Naive thymus-derived CD4-positive, alpha-beta T cell (primary cell): ENCODE measurements at regions of chr19 and their contacts with region 1.

Region 1: DNA sequence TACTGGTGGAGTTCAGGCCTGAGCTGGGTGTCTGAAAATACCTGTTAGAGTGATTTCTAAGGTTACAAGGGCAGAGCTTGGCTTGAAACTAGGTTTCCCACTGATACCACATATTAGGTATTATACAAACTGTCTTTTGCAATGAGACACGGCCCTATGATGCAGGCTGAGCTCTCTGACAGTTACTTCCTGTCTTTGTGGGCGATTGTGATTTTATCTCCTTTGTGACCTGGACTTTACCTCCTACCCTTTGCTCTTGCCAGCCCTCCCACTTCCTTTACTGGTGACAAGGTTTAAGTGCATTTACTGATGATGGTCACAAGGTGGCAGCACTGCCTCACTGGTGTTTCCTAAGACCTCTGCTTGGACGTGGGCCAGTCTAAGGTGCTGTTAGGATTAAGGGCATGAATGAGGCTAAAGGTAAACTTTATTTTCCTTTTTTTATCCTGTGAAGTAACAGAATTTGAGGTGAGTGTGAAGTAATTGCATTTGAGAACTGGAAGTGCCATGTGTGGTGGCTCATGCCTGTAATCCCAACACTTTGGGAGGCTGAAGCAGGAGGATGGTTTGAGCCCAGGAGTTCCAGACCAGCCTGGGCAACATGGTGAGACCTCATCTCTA is 7.7 kb upstream of the CXCL17 start:
- DNase-seq: peak; percentile 42 to 88 (median 81)
- ATAC-seq: peak; percentile 97
- H3K4me3 ChIP-seq: no peak overlapping the region
- H3K4me3 Mint-ChIP-seq: no peak overlapping the region
- H3K27ac ChIP-seq: peak overlapping the region; percentile 62
- H3K27ac Mint-ChIP-seq: no peak overlapping the region
- H3K4me1 ChIP-seq: peaks cover 9 to 13% of the 10 kb centered on the region in 2 donors
- H3K4me1 Mint-ChIP-seq: peaks cover 0 to 20% (median 7%) of the 10 kb centered on the region in 7 donors
- H3K27me3 ChIP-seq: no peaks in the 10 kb centered on the region
- H3K27me3 Mint-ChIP-seq: peaks cover 0 to 3% (median 0%) of the 10 kb centered on the region in 5 donors

Region 2: GRCh38 chr19:42497492-42498168 is 47.2 kb after region 1 on chr19:
- CTCF ChIA-PET with region 1: no interaction called
- POLR2A ChIA-PET with region 1: no interaction called
- intact Hi-C with region 1: loop called in 1 of 2 experiments (anchors 5 kb)
- DNase-seq: no peak
- ATAC-seq: no peak
- H3K4me3 ChIP-seq: no peak overlapping the region
- H3K4me3 Mint-ChIP-seq: peak overlapping the region in 1 of 10 donors; percentile 2
- H3K27ac ChIP-seq: no peak overlapping the region
- H3K27ac Mint-ChIP-seq: peak overlapping the region in 1 of 9 donors; percentile 19
- H3K4me1 ChIP-seq: no peaks in the 10 kb centered on the region
- H3K4me1 Mint-ChIP-seq: peaks cover 0 to 29% (median 5%) of the 10 kb centered on the region in 7 donors
- H3K27me3 ChIP-seq: no peaks in the 10 kb centered on the region
- H3K27me3 Mint-ChIP-seq: no peaks in the 10 kb centered on the region

Region 3: GRCh38 chr19:42529248-42529764 is 78.9 kb after region 1 on chr19:
- CTCF ChIA-PET with region 1: interaction called, 152 read pairs
- POLR2A ChIA-PET with region 1: interaction called, 18 read pairs
- intact Hi-C with region 1: loop called in 1 of 2 experiments (anchors 1 kb)
- DNase-seq: peak; percentile 45 to 76 (median 64)
- ATAC-seq: peak; percentile 94
- H3K4me3 ChIP-seq: peak overlapping the region; percentile 53
- H3K4me3 Mint-ChIP-seq: peak overlapping the region; percentile 77 to 98 (median 87)
- H3K27ac ChIP-seq: peak overlapping the region; percentile 72
- H3K27ac Mint-ChIP-seq: peak overlapping the region; percentile 70 to 96 (median 93)
- H3K4me1 ChIP-seq: peaks cover 18 to 21% of the 10 kb centered on the region in 2 donors
- H3K4me1 Mint-ChIP-seq: peaks cover 31 to 51% (median 40%) of the 10 kb centered on the region in 7 donors
- H3K27me3 ChIP-seq: no peaks in the 10 kb centered on the region
- H3K27me3 Mint-ChIP-seq: peaks cover 0 to under 1% (median 0%) of the 10 kb centered on the region in 5 donors

Region 4: DNA sequence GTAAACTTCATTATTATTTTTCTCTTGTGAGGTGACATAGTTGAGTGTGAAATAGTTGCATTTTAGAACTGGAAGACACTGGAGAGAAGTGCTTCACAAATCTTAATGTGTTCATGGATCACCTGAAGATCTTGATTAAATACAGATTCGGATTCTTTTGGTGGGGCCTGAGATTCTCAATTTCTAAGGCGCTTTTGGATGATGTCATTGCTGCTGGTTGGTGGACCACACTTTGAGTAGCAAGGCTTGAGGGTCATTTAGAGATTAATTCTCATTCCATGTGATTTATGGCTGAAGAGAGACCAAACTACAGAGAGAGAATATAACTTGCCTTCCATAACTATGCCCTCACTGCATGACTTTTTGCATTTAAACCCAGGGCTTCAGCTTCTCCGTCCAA is 117.1 kb after region 1 on chr19:
- CTCF ChIA-PET with region 1: interaction called, 3 read pairs
- POLR2A ChIA-PET with region 1: no interaction called
- intact Hi-C with region 1: loop called in 1 of 2 experiments (anchors 1 kb)
- DNase-seq: no peak
- ATAC-seq: no peak
- H3K4me3 ChIP-seq: no peak overlapping the region
- H3K4me3 Mint-ChIP-seq: no peak overlapping the region
- H3K27ac ChIP-seq: no peak overlapping the region
- H3K27ac Mint-ChIP-seq: no peak overlapping the region
- H3K4me1 ChIP-seq: no peaks in the 10 kb centered on the region
- H3K4me1 Mint-ChIP-seq: peaks cover 0 to 9% (median 4%) of the 10 kb centered on the region in 7 donors
- H3K27me3 ChIP-seq: no peaks in the 10 kb centered on the region
- H3K27me3 Mint-ChIP-seq: peaks cover under 1 to 29% (median 14%) of the 10 kb centered on the region in 5 donors

Region 5: GRCh38 chr19:42596391-42597072 is 146.1 kb after region 1 on chr19:
- CTCF ChIA-PET with region 1: interaction called, 3 read pairs
- POLR2A ChIA-PET with region 1: no interaction called
- intact Hi-C with region 1: loop called in 1 of 2 experiments (anchors 1 kb)
- DNase-seq: peak in 7 of 9 donors; percentile 2 to 54 (median 25)
- ATAC-seq: peak; percentile 61
- H3K4me3 ChIP-seq: no peak overlapping the region
- H3K4me3 Mint-ChIP-seq: no peak overlapping the region
- H3K27ac ChIP-seq: no peak overlapping the region
- H3K27ac Mint-ChIP-seq: no peak overlapping the region
- H3K4me1 ChIP-seq: no peaks in the 10 kb centered on the region
- H3K4me1 Mint-ChIP-seq: peaks cover 0 to 6% (median 4%) of the 10 kb centered on the region in 7 donors
- H3K27me3 ChIP-seq: no peaks in the 10 kb centered on the region
- H3K27me3 Mint-ChIP-seq: peaks cover 7 to 15% (median 10%) of the 10 kb centered on the region in 5 donors